Keratinocyte (primary cell): ENCODE measurements at regions of chr3 and their contacts with region 1.

Region 1: DNA sequence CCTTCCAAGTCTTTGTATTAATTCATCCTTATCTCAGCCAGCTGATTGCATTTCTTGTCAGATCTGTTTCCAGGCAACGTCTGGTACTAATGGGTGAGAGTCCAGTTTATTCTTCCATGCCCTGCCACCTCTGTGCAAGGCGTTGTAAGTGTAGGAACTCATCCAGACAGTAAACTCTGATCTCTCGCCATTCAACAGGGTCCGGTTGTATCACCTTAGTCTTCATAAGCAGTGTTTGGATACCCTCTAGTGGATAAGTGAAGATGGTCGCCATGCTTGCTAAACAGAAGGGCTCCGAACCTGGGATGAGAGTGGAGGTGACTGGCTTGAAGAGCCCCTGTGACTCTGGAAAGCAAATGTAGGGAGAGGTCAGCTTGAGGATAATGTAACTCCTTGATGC is 51.6 kb upstream of the CMTM7 start:
- DNase-seq: no peak
- H3K4me3 ChIP-seq: no peak overlapping the region
- H3K27ac ChIP-seq: no peak overlapping the region
- H3K4me1 ChIP-seq: no peaks in the 10 kb centered on the region
- H3K27me3 ChIP-seq: peaks cover 3% of the 10 kb centered on the region
- CTCF ChIP-seq: peak; percentile 39 to 69 (median 65)

Region 2: DNA sequence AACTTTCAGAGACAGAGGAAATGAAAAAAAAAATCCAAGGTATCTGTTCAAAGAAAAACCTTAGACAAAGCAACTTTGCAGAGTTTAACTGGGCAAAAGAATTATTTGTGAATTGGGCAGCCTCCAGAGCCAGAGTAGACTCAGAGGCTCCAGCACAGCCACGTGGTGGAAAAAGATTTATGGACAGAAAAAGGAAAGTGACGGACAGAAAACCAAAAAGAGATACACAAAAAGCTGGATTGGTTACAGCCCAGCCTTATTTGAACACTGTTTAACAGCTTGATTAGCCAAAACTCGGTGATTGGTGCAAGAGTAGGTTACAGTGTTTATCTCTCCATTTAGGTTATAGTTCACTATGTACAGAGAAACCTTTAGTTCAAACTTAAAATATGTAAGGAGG is 257.3 kb before region 1 on chr3:
- dilution Hi-C with region 1: no loop called
- DNase-seq: no peak
- H3K4me3 ChIP-seq: no peak overlapping the region
- H3K27ac ChIP-seq: no peak overlapping the region
- H3K4me1 ChIP-seq: no peaks in the 10 kb centered on the region
- H3K27me3 ChIP-seq: no peaks in the 10 kb centered on the region
- CTCF ChIP-seq: no peak

Region 3: GRCh38 chr3:32177702-32178198 is 162.3 kb before region 1 on chr3:
- dilution Hi-C with region 1: loop called (anchors 25 kb)
- DNase-seq: peak; percentile 60
- H3K4me3 ChIP-seq: no peak overlapping the region
- H3K27ac ChIP-seq: no peak overlapping the region
- H3K4me1 ChIP-seq: peaks cover 9% of the 10 kb centered on the region
- H3K27me3 ChIP-seq: peaks cover 10% of the 10 kb centered on the region
- CTCF ChIP-seq: peak; percentile 94 to 99 (median 98)

Region 4: GRCh38 chr3:32522682-32523081 is 182.6 kb after region 1 on chr3:
- dilution Hi-C with region 1: no loop called
- DNase-seq: no peak
- H3K4me3 ChIP-seq: no peak overlapping the region
- H3K27ac ChIP-seq: no peak overlapping the region
- H3K4me1 ChIP-seq: no peaks in the 10 kb centered on the region
- H3K27me3 ChIP-seq: no peaks in the 10 kb centered on the region
- CTCF ChIP-seq: no peak